SK-N-SH (cell line): ENCODE measurements at regions of chr7 and their contacts with region 1.

Region 1: GRCh38 chr7:154744256-154744860 is 258.6 kb downstream of the PAXIP1 start:
- DNase-seq: peak; percentile 86
- H3K4me3 ChIP-seq: no peak overlapping the region; a peak in 1 of 4 replicates
- H3K27ac ChIP-seq: peak overlapping the region in 1 of 2 experiments; percentile 75; a peak in 1 of 4 replicates
- H3K4me1 ChIP-seq: peaks cover 0 to 40% of the 10 kb centered on the region in 2 experiments; a peak in 2 of 4 replicates
- H3K27me3 ChIP-seq: no peaks in the 10 kb centered on the region
- CTCF ChIP-seq: peak; percentile 61
- EP300 ChIP-seq: no peak
- RAD21 ChIP-seq: peak; percentile 73

Region 2: DNA sequence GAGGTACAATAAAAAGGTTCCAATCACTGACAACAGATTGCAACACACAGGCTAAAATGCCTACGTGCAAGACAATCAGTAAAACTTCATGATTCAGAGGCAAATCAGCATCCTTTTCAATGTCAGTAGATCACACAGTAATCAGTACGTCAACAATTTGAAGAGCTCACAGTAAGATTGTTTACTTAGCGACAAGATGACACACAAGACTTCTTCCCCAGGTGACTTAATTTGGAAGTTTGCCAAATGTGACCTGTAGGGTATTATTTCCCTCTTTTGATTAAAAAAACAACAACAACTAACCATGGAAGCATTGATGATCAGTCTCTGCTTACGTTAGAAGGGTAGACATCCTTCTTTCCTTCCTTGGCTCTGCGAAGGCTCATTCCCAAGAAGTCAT is 195.0 kb before region 1 on chr7:
- CTCF ChIA-PET with region 1: interaction called, 12 read pairs
- POLR2A ChIA-PET with region 1: no interaction called
- DNase-seq: no peak
- H3K4me3 ChIP-seq: no peak overlapping the region
- H3K27ac ChIP-seq: no peak overlapping the region
- H3K4me1 ChIP-seq: peaks cover 0 to 22% of the 10 kb centered on the region in 2 experiments; a peak in 2 of 4 replicates
- H3K27me3 ChIP-seq: no peaks in the 10 kb centered on the region
- CTCF ChIP-seq: no peak
- EP300 ChIP-seq: no peak
- RAD21 ChIP-seq: no peak

Region 3: GRCh38 chr7:154610903-154611302 is 133.5 kb before region 1 on chr7:
- CTCF ChIA-PET with region 1: interaction called, 11 read pairs
- POLR2A ChIA-PET with region 1: no interaction called
- DNase-seq: peak; percentile 51
- H3K4me3 ChIP-seq: no peak overlapping the region
- H3K27ac ChIP-seq: no peak overlapping the region; a peak in 1 of 4 replicates
- H3K4me1 ChIP-seq: no peaks in the 10 kb centered on the region; a peak in 1 of 4 replicates
- H3K27me3 ChIP-seq: no peaks in the 10 kb centered on the region
- CTCF ChIP-seq: no peak
- EP300 ChIP-seq: peak in 1 of 2 experiments; percentile 61; a peak in 1 of 4 replicates
- RAD21 ChIP-seq: no peak; the same call in 1 of the 2 replicates

Region 4: GRCh38 chr7:154677454-154677853 is 66.9 kb before region 1 on chr7:
- CTCF ChIA-PET with region 1: interaction called, 13 read pairs
- POLR2A ChIA-PET with region 1: no interaction called
- DNase-seq: no peak
- H3K4me3 ChIP-seq: no peak overlapping the region
- H3K27ac ChIP-seq: no peak overlapping the region
- H3K4me1 ChIP-seq: peaks cover 0 to 9% of the 10 kb centered on the region in 2 experiments; a peak in 1 of 4 replicates
- H3K27me3 ChIP-seq: no peaks in the 10 kb centered on the region
- CTCF ChIP-seq: no peak
- EP300 ChIP-seq: no peak
- RAD21 ChIP-seq: no peak

Region 5: DNA sequence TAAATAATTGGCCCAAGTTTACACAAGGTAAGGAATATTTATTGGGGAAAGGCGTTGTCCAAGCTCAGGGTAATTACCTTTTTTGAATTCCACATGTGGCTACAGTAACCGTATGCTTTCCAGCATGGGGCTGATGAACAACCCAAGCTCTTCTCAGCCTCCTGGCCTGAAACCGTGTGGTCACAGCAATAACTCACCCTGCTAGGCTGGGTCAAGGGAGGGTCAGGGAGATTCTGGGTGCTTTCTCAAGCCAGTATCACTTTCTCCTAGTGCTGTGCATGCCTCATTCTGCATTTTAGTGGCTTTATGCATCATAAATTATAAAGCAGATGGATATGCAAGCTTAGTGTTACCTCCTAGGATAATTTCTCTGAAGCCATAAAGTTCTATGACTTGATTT is 15.3 kb before region 1 on chr7:
- CTCF ChIA-PET with region 1: interaction called, 149 read pairs
- POLR2A ChIA-PET with region 1: no interaction called
- DNase-seq: no peak
- H3K4me3 ChIP-seq: no peak overlapping the region
- H3K27ac ChIP-seq: no peak overlapping the region
- H3K4me1 ChIP-seq: no peaks in the 10 kb centered on the region
- H3K27me3 ChIP-seq: no peaks in the 10 kb centered on the region
- CTCF ChIP-seq: no peak
- EP300 ChIP-seq: no peak
- RAD21 ChIP-seq: no peak

Region 6: GRCh38 chr7:154794110-154794780 is 49.9 kb after region 1 on chr7:
- CTCF ChIA-PET with region 1: interaction called, 10 read pairs
- POLR2A ChIA-PET with region 1: no interaction called
- DNase-seq: no peak
- H3K4me3 ChIP-seq: no peak overlapping the region
- H3K27ac ChIP-seq: no peak overlapping the region
- H3K4me1 ChIP-seq: peaks cover 0 to 6% of the 10 kb centered on the region in 2 experiments; a peak in 1 of 4 replicates
- H3K27me3 ChIP-seq: no peaks in the 10 kb centered on the region
- CTCF ChIP-seq: no peak
- EP300 ChIP-seq: no peak
- RAD21 ChIP-seq: no peak